ENCODE measurements at regions of chr6 and their contacts with region 1.

Region 1: GRCh38 chr6:129606664-129607063 is 103.3 kb downstream of the ARHGAP18 start:
- DNase-seq: no peak
- H3K4me3 ChIP-seq: no peak overlapping the region
- H3K27ac ChIP-seq: no peak overlapping the region
- H3K4me1 ChIP-seq: no peaks in the 10 kb centered on the region
- H3K27me3 ChIP-seq: no peaks in the 10 kb centered on the region
- CTCF ChIP-seq: no peak
- POLR2A ChIP-seq: no peak

Region 2: GRCh38 chr6:129661536-129662405 is 55.1 kb after region 1 on chr6:
- intact Hi-C with region 1: loop called (anchors 10 kb)
- DNase-seq: no peak
- H3K4me3 ChIP-seq: no peak overlapping the region
- H3K27ac ChIP-seq: peak overlapping the region; percentile 36 to 51
- H3K4me1 ChIP-seq: no peaks in the 10 kb centered on the region
- H3K27me3 ChIP-seq: no peaks in the 10 kb centered on the region
- CTCF ChIP-seq: no peak
- POLR2A ChIP-seq: no peak